CD14-positive monocyte (primary cell): ENCODE measurements at regions of chr7 and their contacts with region 1.

Region 1: GRCh38 chr7:22001345-22002004 is 55.8 kb upstream of the CDCA7L start:
- DNase-seq: peak; percentile 5 to 37 (median 18)
- H3K4me3 ChIP-seq: no peak overlapping the region
- H3K4me3 Mint-ChIP-seq: no peak overlapping the region
- H3K27ac ChIP-seq: no peak overlapping the region
- H3K27ac Mint-ChIP-seq: no peak overlapping the region
- H3K4me1 ChIP-seq: no peaks in the 10 kb centered on the region
- H3K4me1 Mint-ChIP-seq: peaks cover 9% of the 10 kb centered on the region
- H3K27me3 ChIP-seq: no peaks in the 10 kb centered on the region
- H3K27me3 Mint-ChIP-seq: peaks cover 0 to 2% (median 1%) of the 10 kb centered on the region in 3 donors
- CTCF ChIP-seq: peak; percentile 84

Region 2: DNA sequence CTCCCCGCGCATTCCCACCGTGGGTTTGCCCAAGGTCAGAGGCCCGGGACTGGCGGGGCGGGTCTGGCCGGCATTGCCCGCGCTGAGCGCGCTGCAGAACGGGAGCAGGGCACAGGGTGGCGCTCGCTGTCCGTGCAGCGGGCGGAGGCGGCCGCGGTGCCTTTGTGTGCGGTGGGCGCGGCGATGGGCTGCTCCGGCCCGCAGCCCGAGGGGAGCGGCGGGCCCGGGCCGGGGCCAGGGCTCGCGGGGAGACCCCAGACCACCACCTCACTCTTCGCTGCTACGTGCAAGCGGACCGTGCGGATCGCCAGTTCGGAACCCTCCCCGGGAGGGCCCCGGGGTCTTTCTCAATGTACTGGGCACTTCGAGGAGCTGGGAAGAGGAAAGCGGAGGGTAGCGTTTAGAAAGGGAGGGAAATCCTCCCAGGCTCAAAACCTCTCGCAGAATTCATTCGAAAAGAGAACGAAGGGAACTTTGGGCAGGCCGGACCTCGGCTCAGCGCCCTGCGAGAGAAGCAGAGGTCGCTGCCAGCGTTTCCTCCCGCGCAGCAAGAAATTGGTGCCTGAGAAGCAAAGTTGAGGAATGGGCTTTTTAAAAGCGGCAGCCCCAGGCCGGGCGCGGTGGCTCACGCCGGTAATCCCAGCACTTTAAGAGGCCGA is 1223.3 kb before region 1 on chr7:
- intact Hi-C with region 1: loop called in 1 of 2 experiments (anchors 10 kb)
- DNase-seq: no peak
- H3K4me3 ChIP-seq: peak overlapping the region in 1 of 3 experiments; percentile 42
- H3K4me3 Mint-ChIP-seq: peak overlapping the region; percentile 62 to 94
- H3K27ac ChIP-seq: no peak overlapping the region
- H3K27ac Mint-ChIP-seq: no peak overlapping the region
- H3K4me1 ChIP-seq: peaks cover 9% of the 10 kb centered on the region in 2 donors
- H3K4me1 Mint-ChIP-seq: peaks cover 20% of the 10 kb centered on the region
- H3K27me3 ChIP-seq: peaks cover 88 to 96% of the 10 kb centered on the region in 2 donors
- H3K27me3 Mint-ChIP-seq: peaks cover 83 to 91% (median 91%) of the 10 kb centered on the region in 3 donors
- CTCF ChIP-seq: peak; percentile 61